Dorsolateral prefrontal cortex (tissue), 120 donors: ENCODE measurements at regions of chr6 and their contacts with region 1.

Region 1: GRCh38 chr6:33761922-33762629 is 15.4 kb upstream of the IP6K3 start:
- DNase-seq: peak in 9 of 10 donors; percentile 49 to 79 (median 64)
- H3K4me3 ChIP-seq: no peak overlapping the region
- H3K27ac ChIP-seq: peak overlapping the region in 22 of 59 donors; percentile 6 to 69 (median 32)
- H3K27me3 ChIP-seq: no peaks in the 10 kb centered on the region
- CTCF ChIP-seq: peak; percentile 35 to 87 (median 64)

Region 2: DNA sequence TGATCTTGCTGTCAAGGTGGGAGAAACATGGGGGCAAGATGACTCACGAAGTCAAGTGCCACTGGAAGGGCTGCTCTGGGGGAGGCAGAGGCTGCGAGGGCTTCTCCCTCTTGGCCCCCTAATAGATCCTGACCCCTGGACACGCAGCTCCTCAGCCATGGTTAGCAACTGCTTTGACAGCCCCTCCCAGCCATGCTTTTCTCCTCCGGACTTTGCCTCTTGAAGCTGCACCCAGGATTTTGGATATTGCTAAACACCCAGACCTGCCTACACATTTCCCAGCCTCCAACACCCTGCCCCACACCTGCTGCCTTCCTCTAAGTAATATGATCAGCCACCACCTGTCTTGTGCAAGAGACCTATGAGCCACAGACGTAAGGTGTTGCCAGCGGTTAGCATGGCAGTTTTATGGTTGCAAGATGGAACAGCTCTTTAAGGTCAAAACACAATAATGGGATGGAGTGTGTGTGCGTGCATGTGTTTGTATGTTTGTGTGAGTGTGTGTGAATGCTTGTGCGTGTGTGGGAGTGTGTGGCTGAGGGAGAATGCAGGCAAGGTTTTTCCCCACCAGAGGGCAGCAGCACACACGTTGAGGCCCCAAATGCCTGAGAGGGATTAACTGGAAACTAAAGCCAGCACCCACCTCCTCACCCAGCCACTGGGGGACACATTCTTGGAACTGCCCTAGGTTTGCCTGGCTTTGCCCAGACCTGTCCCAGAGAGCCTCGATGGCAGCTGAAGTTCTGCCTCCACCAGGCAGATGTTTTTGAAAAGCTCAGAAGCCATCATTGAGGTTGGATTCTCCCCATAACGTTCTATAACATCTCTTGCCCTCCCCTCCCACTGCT is 17.9 kb before region 1 on chr6:
- intact Hi-C with region 1: loop called in 1 of 2 experiments (anchors 1 kb)
- DNase-seq: peak; percentile 69 to 83 (median 79)
- H3K4me3 ChIP-seq: peak overlapping the region in 47 of 59 donors; percentile 16 to 79 (median 58)
- H3K27ac ChIP-seq: peak overlapping the region in 52 of 59 donors; percentile 44 to 99 (median 94)
- H3K27me3 ChIP-seq: no peaks in the 10 kb centered on the region
- CTCF ChIP-seq: peak; percentile 61 to 94 (median 87)